ENCODE measurements at regions of chr12 and their contacts with region 1.

Region 1: DNA sequence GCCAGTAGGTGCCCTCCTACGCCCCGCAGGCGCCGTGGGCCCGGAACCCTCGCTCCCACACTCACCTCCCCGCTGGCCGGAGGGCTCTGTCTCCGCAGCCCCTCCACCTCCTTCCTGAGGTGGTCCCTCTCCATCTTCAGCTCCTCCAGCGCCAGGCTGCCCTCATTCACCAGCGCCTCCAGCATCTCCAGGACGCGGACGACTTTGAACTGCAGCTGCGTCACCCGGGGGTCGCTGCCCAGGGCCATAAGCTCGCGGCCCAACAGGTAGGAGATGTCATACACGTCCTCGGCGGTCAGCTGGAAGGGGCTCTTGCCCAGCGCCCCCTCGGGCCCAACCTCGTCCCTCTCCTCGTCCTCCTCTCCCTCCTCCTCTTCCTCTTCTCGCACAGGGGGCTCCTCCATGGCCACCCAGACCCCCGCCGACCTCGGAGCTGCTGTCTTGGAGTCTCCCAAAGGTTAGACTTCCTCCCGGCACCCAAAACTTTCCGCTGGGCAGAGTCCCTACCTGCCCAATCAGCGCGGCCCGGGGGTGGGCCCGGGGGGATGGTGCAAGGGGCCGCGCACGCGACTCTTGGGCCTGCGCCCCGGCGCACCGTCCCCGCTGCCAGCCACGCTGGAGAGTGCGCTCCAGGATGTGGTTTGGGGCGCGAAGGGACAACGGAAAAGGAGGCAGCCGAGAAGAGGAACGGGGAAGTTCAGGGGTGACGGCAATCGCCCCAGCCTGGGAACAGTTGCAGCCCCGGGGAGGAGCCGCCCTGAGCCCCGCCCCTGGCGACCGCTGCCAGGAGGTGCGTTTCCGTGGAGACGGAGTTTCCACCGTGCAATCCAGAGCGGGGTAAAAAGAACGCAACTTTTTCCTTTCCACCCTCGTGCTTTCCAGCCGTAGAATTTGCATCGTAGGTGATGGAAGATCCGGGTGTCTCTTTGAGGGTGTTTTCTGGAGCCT is at the start of gene RILPL2:
- DNase-seq: peak; percentile 87 to 89
- H3K4me3 ChIP-seq: peak within 1 kb of the TSS; percentile 69 to 91 (median 77)
- H3K27ac ChIP-seq: peak within 1 kb of the TSS; percentile 71 to 93 (median 82)
- H3K4me1 ChIP-seq: peaks cover 35 to 45% of the 10 kb centered on the region in 2 donors
- H3K27me3 ChIP-seq: no peaks in the 10 kb centered on the region
- CTCF ChIP-seq: no peak
- POLR2A ChIP-seq: peak; percentile 13 to 77
- total RNA-seq, gene RILPL2: 10.7 to 15.2 (median 12.7) TPM

Region 2: GRCh38 chr12:123388177-123388947 is 47.9 kb before region 1 on chr12:
- intact Hi-C with region 1: loop called (anchors 10 kb)
- DNase-seq: peak; percentile 78 to 82
- H3K4me3 ChIP-seq: peak overlapping the region in 2 of 3 donors; percentile 42 to 46
- H3K27ac ChIP-seq: peak overlapping the region; percentile 78 to 86 (median 81)
- H3K4me1 ChIP-seq: peaks cover 43 to 46% of the 10 kb centered on the region in 2 donors
- H3K27me3 ChIP-seq: no peaks in the 10 kb centered on the region
- CTCF ChIP-seq: peak in 1 of 6 experiments; percentile 32
- POLR2A ChIP-seq: no peak

Region 3: DNA sequence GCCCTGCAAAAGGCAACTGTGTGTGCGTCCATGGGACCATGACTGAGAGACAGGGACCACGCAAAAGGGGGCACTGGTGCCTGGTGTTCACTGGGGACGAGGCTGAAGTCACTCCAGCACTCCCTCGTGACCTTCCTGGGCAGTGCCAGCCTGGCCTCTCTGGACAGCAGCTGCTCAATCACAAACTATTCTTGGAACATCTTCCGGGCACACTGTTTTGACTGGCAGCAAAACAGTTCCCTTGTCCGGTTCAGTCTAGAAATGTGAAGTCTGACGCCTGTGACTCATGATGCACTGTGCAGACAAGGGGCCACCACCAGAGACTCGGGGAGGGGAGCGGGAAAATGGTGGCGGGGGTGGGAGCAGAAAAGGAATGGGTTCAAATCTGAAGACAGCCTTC is 42.5 kb after region 1 on chr12:
- intact Hi-C with region 1: loop called (anchors 2 kb)
- DNase-seq: peak; percentile 35 to 66
- H3K4me3 ChIP-seq: no peak overlapping the region
- H3K27ac ChIP-seq: peak overlapping the region; percentile 65 to 82 (median 69)
- H3K4me1 ChIP-seq: peaks cover 21 to 56% of the 10 kb centered on the region in 2 donors
- H3K27me3 ChIP-seq: no peaks in the 10 kb centered on the region
- CTCF ChIP-seq: no peak
- POLR2A ChIP-seq: no peak

Measured in thyroid gland (tissue), 4 donors.